A673 (cell line): ENCODE measurements at regions of chr4 and their contacts with region 1.

Region 1: GRCh38 chr4:110344162-110344561 is 131.8 kb upstream of the ENPEP start:
- DNase-seq: peak; percentile 71
- H3K4me3 ChIP-seq: no peak overlapping the region
- H3K27ac ChIP-seq: no peak overlapping the region
- H3K4me1 ChIP-seq: peaks cover 53% of the 10 kb centered on the region
- H3K27me3 ChIP-seq: no peaks in the 10 kb centered on the region
- CTCF ChIP-seq: peak; percentile 67

Region 2: DNA sequence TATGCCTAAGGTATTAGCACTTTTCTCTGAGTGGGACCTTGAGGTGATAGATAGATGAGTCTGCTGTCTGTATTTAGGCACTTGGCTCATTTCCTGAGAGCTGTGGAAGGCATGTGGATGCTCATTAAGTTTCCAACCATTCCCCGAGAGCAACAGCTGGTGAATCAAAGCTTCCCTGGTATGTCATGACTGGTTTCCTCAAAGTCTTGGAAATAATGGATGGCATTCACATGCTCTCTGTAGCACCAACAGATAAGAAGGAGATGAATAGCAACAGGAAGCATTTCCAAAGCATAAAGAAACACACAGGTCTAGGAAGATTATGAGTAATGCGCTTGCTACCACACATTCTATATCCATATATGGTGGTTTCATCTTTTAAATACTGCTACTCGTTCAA is 1463.0 kb before region 1 on chr4:
- CTCF ChIA-PET with region 1: no interaction called
- POLR2A ChIA-PET with region 1: interaction called, 11 read pairs
- intact Hi-C with region 1: no loop called
- DNase-seq: peak; percentile 93
- H3K4me3 ChIP-seq: no peak overlapping the region
- H3K27ac ChIP-seq: peak overlapping the region; percentile 73
- H3K4me1 ChIP-seq: peaks cover 83% of the 10 kb centered on the region
- H3K27me3 ChIP-seq: no peaks in the 10 kb centered on the region
- CTCF ChIP-seq: no peak

Region 3: GRCh38 chr4:109815151-109816081 is 528.7 kb before region 1 on chr4 and contains the start of gene GAR1:
- CTCF ChIA-PET with region 1: no interaction called
- POLR2A ChIA-PET with region 1: no interaction called
- intact Hi-C with region 1: no loop called
- DNase-seq: peak; percentile 97
- H3K4me3 ChIP-seq: peak within 1 kb of the TSS; percentile 65
- H3K27ac ChIP-seq: peak within 1 kb of the TSS; percentile 88
- H3K4me1 ChIP-seq: peaks cover 10% of the 10 kb centered on the region
- H3K27me3 ChIP-seq: no peaks in the 10 kb centered on the region
- CTCF ChIP-seq: no peak
- total RNA-seq, gene GAR1: 56.0 and 67.6 TPM in 2 replicates

Region 4: GRCh38 chr4:109879118-109879517 is 465.0 kb before region 1 on chr4:
- CTCF ChIA-PET with region 1: no interaction called
- POLR2A ChIA-PET with region 1: interaction called, 23 read pairs
- intact Hi-C with region 1: no loop called
- DNase-seq: no peak
- H3K4me3 ChIP-seq: no peak overlapping the region
- H3K27ac ChIP-seq: no peak overlapping the region
- H3K4me1 ChIP-seq: no peaks in the 10 kb centered on the region
- H3K27me3 ChIP-seq: no peaks in the 10 kb centered on the region
- CTCF ChIP-seq: no peak

Region 5: DNA sequence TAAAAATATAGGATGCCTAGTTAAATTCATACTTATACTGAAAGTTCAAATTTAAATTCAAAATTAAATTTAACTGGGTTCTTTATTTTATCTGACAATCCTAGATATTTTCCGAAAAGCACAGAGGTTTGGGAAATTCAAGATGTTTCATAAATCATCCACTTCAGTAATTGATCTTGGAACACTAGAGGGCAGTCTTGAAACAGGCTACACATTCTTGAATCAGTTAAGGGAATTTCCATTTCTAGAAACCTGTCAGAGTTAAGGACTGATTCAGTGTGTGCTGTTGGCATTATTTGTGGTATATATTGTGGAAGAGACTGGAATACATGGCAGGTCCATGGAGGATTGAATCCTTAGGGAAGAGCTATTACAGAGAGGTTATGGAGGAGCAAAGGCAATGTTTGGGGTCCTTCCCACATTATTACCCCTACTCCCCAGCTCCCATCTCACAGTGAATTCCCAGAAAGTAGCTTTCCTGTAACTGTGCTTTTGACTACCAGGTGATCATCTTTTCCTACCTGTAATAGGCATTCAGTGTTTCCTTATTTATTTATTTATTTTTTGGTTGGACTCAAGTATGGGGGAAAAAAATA is 338.6 kb before region 1 on chr4:
- CTCF ChIA-PET with region 1: interaction called, 3 read pairs
- POLR2A ChIA-PET with region 1: no interaction called
- intact Hi-C with region 1: loop called (anchors 5 kb)
- DNase-seq: peak; percentile 84
- H3K4me3 ChIP-seq: no peak overlapping the region
- H3K27ac ChIP-seq: no peak overlapping the region
- H3K4me1 ChIP-seq: peaks cover 3% of the 10 kb centered on the region
- H3K27me3 ChIP-seq: no peaks in the 10 kb centered on the region
- CTCF ChIP-seq: peak; percentile 85

Region 6: DNA sequence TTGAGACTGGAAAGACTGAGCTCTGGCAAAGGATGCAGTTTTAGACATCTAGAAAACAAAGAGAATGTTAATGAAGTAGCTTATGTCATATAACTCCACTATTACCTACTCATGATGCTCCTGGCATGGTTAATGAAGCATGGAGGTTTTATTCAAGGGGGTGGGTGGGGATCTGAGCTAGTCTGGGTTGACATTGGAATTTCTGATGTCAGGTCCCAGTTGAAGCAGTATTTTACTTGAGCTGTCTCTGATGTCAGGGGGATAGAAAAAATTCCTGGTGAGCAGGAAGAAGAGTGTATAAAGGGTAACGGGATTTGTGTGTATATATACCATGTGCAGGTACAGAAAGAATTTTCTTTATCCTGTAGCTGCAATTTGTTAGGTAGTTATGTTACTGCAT is 247.8 kb before region 1 on chr4:
- CTCF ChIA-PET with region 1: no interaction called
- POLR2A ChIA-PET with region 1: no interaction called
- intact Hi-C with region 1: no loop called
- DNase-seq: no peak
- H3K4me3 ChIP-seq: no peak overlapping the region
- H3K27ac ChIP-seq: no peak overlapping the region
- H3K4me1 ChIP-seq: peaks cover 20% of the 10 kb centered on the region
- H3K27me3 ChIP-seq: no peaks in the 10 kb centered on the region
- CTCF ChIP-seq: no peak

Region 7: GRCh38 chr4:110510955-110511544 is 166.9 kb after region 1 on chr4:
- CTCF ChIA-PET with region 1: interaction called, 46 read pairs
- POLR2A ChIA-PET with region 1: no interaction called
- intact Hi-C with region 1: loop called (anchors 1 kb)
- DNase-seq: peak; percentile 85
- H3K4me3 ChIP-seq: no peak overlapping the region
- H3K27ac ChIP-seq: no peak overlapping the region
- H3K4me1 ChIP-seq: peaks cover 25% of the 10 kb centered on the region
- H3K27me3 ChIP-seq: no peaks in the 10 kb centered on the region
- CTCF ChIP-seq: peak; percentile 75